Adrenal gland (tissue), 19 donors: ENCODE measurements at regions of chr2 and their contacts with region 1.

Region 1: DNA sequence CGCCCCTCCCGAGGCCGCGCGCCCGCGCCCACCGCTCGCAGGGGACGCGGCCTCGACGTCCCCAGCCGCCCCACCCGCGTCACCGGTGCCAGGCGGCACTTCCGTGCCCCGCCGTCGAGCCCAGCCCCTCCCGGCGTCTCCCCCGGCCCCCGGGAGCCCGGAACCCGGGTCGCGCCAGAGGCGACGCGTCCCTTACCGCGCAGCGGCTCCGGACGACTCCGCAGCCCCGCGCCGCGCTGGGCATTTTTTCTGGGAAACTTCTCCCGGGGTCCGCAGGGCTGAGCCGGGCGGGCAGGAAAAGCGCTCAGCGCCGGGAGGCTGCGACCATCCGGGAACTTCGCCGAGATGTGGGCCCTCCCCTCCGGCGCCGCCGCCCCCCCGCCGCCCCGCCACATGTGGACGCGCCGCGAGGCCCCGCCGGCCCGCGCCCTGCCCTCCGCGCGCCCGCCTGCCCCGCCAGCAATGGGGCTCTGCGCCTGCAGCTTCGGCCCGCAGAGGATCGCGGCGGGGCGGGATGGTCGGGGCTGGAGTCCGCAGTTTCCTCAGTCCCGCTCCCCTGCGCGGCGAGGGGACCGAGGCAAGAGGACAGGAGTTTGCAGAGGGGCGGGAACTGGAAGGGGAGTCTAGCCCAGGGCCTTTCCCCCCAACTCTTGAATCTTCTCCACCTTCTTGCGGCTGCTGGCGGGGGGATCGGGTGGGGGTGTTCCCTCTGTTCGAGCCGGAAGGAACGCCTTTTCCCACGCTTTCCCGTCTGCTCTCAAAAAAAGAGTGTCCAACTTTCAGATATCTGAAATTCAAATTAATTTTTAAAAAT is 81.5 kb downstream of the CHRNA1 start:
- DNase-seq: peak; percentile 39 to 72 (median 60)
- H3K4me3 ChIP-seq: peak overlapping the region; percentile 35 to 92 (median 78)
- H3K27ac ChIP-seq: peak overlapping the region in 3 of 5 donors; percentile 32 to 78 (median 64)
- H3K4me1 ChIP-seq: peaks cover 0 to 6% of the 10 kb centered on the region in 2 donors
- H3K27me3 ChIP-seq: no peaks in the 10 kb centered on the region
- CTCF ChIP-seq: no peak
- POLR2A ChIP-seq: no peak

Region 2: GRCh38 chr2:174603280-174603679 is 79.5 kb before region 1 on chr2:
- intact Hi-C with region 1: loop called in 1 of 2 experiments (anchors 10 kb)
- DNase-seq: peak; percentile 60 to 82 (median 73)
- H3K4me3 ChIP-seq: no peak overlapping the region
- H3K27ac ChIP-seq: peak overlapping the region in 1 of 5 donors; percentile 7
- H3K4me1 ChIP-seq: peaks cover under 1 to 20% of the 10 kb centered on the region in 2 donors
- H3K27me3 ChIP-seq: no peaks in the 10 kb centered on the region
- CTCF ChIP-seq: peak; percentile 32 to 61 (median 52)
- POLR2A ChIP-seq: no peak

Region 3: GRCh38 chr2:174717273-174717672 is 34.5 kb after region 1 on chr2:
- intact Hi-C with region 1: no loop called
- DNase-seq: no peak
- H3K4me3 ChIP-seq: no peak overlapping the region
- H3K27ac ChIP-seq: no peak overlapping the region
- H3K4me1 ChIP-seq: no peaks in the 10 kb centered on the region
- H3K27me3 ChIP-seq: no peaks in the 10 kb centered on the region
- CTCF ChIP-seq: no peak
- POLR2A ChIP-seq: no peak

Region 4: GRCh38 chr2:174764280-174765255 is 81.8 kb after region 1 on chr2 and contains the start of gene CHRNA1:
- intact Hi-C with region 1: no loop called
- DNase-seq: no peak
- H3K4me3 ChIP-seq: no peak within 1 kb of the TSS
- H3K27ac ChIP-seq: no peak within 1 kb of the TSS
- H3K4me1 ChIP-seq: no peaks in the 10 kb centered on the region
- H3K27me3 ChIP-seq: no peaks in the 10 kb centered on the region
- CTCF ChIP-seq: no peak
- POLR2A ChIP-seq: no peak
- total RNA-seq, gene CHRNA1: 0.37 TPM in 1 of 9 donors, not detected in the others